Mammary epithelial cell (primary cell): ENCODE measurements at regions of chr1 and their contacts with region 1.

Region 1: GRCh38 chr1:14500041-14500440 is 98.4 kb upstream of the KAZN start:
- DNase-seq: no peak
- H3K4me3 ChIP-seq: no peak overlapping the region
- H3K27ac ChIP-seq: no peak overlapping the region
- H3K4me1 ChIP-seq: no peaks in the 10 kb centered on the region
- H3K27me3 ChIP-seq: no peaks in the 10 kb centered on the region
- CTCF ChIP-seq: no peak

Region 2: GRCh38 chr1:14538335-14538734 is 38.3 kb after region 1 on chr1:
- CTCF ChIA-PET with region 1: no interaction called
- dilution Hi-C with region 1: loop called (anchors 5 kb)
- in situ Hi-C with region 1: no loop called
- intact Hi-C with region 1: no loop called
- DNase-seq: no peak
- H3K4me3 ChIP-seq: no peak overlapping the region
- H3K27ac ChIP-seq: no peak overlapping the region
- H3K4me1 ChIP-seq: no peaks in the 10 kb centered on the region
- H3K27me3 ChIP-seq: no peaks in the 10 kb centered on the region
- CTCF ChIP-seq: peak; percentile 24 to 40